ENCODE measurements at regions of chr9 and their contacts with region 1.

Region 1: DNA sequence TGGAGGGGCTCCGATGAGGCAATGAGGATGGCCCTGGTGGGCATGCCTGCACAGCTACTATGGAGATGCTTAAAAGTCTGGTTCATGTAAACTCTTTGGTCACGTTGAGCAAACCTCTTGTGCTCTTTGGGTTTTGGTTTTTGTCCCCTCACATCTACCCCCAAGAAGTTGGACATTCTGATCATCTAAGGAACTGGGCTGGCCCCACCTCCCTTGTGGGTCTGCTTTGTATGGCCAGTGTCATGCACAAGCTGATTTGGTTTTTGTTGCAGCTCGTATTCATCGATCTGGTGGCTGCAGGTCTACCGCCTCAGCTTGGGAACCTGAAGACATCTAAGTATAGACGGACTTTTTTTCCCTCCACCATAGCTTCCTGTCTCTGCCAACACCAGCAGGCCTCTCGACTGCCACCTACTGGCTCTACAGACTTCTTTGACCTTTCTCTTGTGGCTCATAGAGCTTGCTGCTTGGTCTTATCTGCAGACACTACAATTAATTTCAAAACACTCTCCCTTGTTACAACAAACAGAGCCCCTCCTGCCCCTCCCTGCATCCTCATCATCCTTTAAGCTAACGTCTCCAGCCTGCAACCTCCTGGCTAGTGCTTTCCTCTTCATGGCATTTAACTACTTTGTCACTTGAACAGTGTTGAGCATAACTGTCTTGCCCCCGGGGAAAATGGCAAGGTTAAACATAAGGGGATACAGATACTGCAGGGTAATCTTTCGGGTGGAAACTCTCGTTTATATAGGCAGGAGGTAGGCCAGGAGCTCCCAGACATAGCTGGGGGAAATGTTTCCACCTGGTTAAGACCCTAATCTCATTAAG is 34.5 kb downstream of the TSTD2 start:
- DNase-seq: peak; percentile 81
- CTCF ChIP-seq: peak; percentile 77

Region 2: GRCh38 chr9:97362266-97363160 is 236.2 kb before region 1 on chr9:
- CTCF ChIA-PET with region 1: no interaction called
- POLR2A ChIA-PET with region 1: no interaction called
- DNase-seq: peak; percentile 51
- CTCF ChIP-seq: no peak

Region 3: GRCh38 chr9:97445119-97445701 is 153.5 kb before region 1 on chr9:
- CTCF ChIA-PET with region 1: interaction called, 13 read pairs
- POLR2A ChIA-PET with region 1: no interaction called
- DNase-seq: no peak
- CTCF ChIP-seq: no peak

Region 4: DNA sequence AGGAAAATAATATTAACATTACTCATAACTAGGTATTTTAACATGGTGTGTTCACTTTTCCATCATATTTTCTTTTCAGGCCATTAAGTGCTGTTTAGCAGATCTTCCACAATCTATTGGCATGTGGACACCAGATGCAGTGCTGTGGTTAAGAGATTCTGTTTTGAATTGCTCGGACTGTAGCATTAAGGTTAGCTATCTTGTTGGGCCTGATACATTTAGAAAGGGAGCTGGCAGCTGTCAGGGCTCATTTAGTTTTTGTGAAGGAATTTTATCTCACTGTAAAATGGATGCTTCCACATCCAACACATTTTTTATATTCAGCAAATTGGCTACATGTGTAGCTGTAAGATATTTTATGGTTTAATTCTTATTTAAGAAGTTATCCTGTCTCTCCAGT is 117.9 kb before region 1 on chr9:
- CTCF ChIA-PET with region 1: interaction called, 18 read pairs
- POLR2A ChIA-PET with region 1: no interaction called
- DNase-seq: no peak
- CTCF ChIP-seq: no peak

Region 5: DNA sequence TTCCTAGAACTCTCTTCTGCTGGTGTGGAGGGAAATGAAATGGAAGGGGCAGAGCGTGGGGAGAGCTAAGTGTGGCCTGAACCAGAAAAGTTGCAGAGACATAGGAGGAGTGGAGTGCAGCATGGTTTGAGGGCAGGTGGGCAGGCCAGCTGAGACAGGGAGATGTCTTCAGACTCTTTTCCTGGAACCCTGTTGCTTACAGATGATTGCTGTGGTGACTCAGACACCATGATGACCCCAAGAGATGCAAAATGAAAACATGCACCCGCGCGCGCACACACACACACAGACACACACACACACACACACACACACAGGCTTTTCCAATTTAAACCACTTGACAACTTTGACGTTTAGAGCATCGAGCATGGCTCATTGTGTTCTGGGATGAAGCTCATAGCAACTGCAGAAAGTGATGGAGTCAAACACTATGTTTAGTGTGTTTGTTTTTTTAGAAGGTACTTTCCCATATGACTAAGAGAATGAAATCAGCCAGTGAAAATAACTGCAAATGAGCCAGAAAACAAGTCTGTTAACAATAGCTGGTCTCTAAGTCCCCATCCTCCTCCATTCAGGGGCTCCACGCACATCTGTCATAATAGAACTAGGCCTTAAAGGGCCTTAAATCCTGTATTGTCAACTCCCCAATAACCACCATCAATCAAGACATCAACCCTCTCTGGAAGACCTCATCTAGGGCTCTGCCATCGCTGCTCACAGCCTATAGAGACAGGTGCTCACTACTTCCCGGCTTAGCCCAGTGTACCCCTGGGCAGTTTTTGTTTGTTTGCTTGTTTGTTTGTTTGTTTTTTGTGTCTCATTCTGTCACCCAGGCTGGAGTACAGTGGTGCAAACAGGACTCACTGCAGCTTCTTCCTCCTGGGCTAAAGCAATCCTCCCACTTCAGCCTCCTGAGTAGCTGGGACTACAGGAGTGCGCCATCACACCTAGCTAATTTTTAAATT is 87.6 kb before region 1 on chr9:
- CTCF ChIA-PET with region 1: interaction called, 16 read pairs
- POLR2A ChIA-PET with region 1: no interaction called
- DNase-seq: peak; percentile 62
- CTCF ChIP-seq: no peak

Region 6: GRCh38 chr9:97559111-97559514 is 39.6 kb before region 1 on chr9:
- CTCF ChIA-PET with region 1: interaction called, 34 read pairs
- POLR2A ChIA-PET with region 1: no interaction called
- DNase-seq: peak; percentile 80
- CTCF ChIP-seq: no peak

Region 7: GRCh38 chr9:97615439-97616072 is 16.9 kb after region 1 on chr9:
- CTCF ChIA-PET with region 1: interaction called, 132 read pairs
- POLR2A ChIA-PET with region 1: no interaction called
- DNase-seq: peak; percentile 63
- CTCF ChIP-seq: peak; percentile 82